PC-9 (cell line): ENCODE measurements at regions of chr10 and their contacts with region 1.

Region 1: DNA sequence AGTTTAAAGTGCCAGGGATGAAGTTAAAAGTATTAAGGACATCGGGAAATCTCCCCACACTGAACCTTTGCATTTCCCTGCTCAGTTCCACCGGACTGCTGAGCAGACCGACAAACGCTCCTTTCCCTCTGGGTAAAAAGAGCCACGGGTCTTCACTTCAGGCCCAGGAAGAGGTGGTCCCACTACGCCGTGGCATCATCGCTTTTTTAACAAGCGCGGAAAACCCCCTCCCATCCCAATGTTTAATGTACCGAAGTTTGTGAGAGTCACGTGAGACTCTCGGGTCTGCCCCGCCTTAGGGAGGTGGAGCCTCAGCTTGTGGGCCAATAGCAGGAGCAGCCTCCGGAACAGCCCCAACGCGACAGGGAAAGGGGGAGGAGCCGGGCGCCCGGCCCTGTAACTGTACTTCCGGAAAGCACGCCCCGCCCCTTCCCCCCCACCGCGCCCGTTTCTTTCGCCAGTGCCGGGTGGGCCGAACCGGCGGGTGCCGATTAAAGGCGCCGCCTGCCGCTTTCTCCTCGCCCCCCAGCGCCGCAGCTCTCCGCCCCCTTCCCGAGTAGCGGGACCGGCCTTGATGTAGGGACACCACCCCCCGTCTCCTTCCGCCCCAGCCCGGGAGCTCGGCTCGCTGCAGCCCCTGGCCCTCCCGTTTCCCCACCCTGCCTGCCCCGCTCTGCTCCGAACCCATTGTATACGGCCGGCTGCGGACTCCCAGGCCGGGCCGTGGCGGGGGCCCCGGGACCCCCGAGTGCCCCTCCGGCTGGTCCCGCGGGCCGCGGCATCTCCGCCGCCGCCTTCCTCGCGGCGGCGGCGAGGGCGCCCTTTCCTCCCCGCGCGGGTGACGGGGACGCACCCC is 2.2 kb upstream of the TRIM8 start:
- DNase-seq: peak; percentile 84 to 90
- H3K4me3 ChIP-seq: peak overlapping the region; percentile 70
- H3K27ac ChIP-seq: peak overlapping the region; percentile 75
- H3K4me1 ChIP-seq: 0 out of 2 replicates have a peak, but pooled peaks cover 4% of the 10 kb centered on the region
- H3K27me3 ChIP-seq: no peaks in the 10 kb centered on the region
- CTCF ChIP-seq: no peak

Region 2: GRCh38 chr10:102503281-102504220 is 138.6 kb before region 1 on chr10 and contains the start of gene SUFU:
- CTCF ChIA-PET with region 1: interaction called, 3 read pairs
- POLR2A ChIA-PET with region 1: no interaction called
- intact Hi-C with region 1: loop called (anchors 2 kb)
- DNase-seq: peak; percentile 85 to 88
- H3K4me3 ChIP-seq: peak within 1 kb of the TSS; percentile 74
- H3K27ac ChIP-seq: no peak within 1 kb of the TSS
- H3K4me1 ChIP-seq: peaks cover 34% of the 10 kb centered on the region
- H3K27me3 ChIP-seq: no peaks in the 10 kb centered on the region
- CTCF ChIP-seq: peak; percentile 79
- total RNA-seq, gene SUFU: 16.9 and 20.2 TPM in 2 replicates

Region 3: GRCh38 chr10:102604379-102604960 is 37.6 kb before region 1 on chr10:
- CTCF ChIA-PET with region 1: no interaction called
- POLR2A ChIA-PET with region 1: no interaction called
- intact Hi-C with region 1: loop called (anchors 2 kb)
- DNase-seq: peak; percentile 68 to 81
- H3K4me3 ChIP-seq: no peak overlapping the region; the same call in 1 of the 2 replicates
- H3K27ac ChIP-seq: peak overlapping the region; percentile 90
- H3K4me1 ChIP-seq: peaks cover 35% of the 10 kb centered on the region
- H3K27me3 ChIP-seq: no peaks in the 10 kb centered on the region
- CTCF ChIP-seq: no peak

Region 4: GRCh38 chr10:102629661-102630614 is 12.2 kb before region 1 on chr10:
- CTCF ChIA-PET with region 1: no interaction called
- POLR2A ChIA-PET with region 1: interaction called, 10 read pairs
- intact Hi-C with region 1: loop called (anchors 1 kb)
- DNase-seq: peak; percentile 85 to 88
- H3K4me3 ChIP-seq: peak overlapping the region; percentile 23; the same call in 1 of the 2 replicates
- H3K27ac ChIP-seq: peak overlapping the region; percentile 84
- H3K4me1 ChIP-seq: peaks cover 79% of the 10 kb centered on the region
- H3K27me3 ChIP-seq: no peaks in the 10 kb centered on the region
- CTCF ChIP-seq: no peak